ENCODE measurements at regions of chr2 and their contacts with region 1.

Region 1: GRCh38 chr2:131673392-131674173 is 145.9 kb downstream of the CCDC74A start:
- DNase-seq: no peak
- ATAC-seq: peak; percentile 97
- H3K4me3 ChIP-seq: peak overlapping the region; percentile 37 to 60
- H3K27ac ChIP-seq: no peak overlapping the region
- H3K4me1 ChIP-seq: no peaks in the 10 kb centered on the region
- H3K27me3 ChIP-seq: peaks cover 2% of the 10 kb centered on the region; the same call in 1 of the 2 replicates
- CTCF ChIP-seq: peak; percentile 92

Region 2: DNA sequence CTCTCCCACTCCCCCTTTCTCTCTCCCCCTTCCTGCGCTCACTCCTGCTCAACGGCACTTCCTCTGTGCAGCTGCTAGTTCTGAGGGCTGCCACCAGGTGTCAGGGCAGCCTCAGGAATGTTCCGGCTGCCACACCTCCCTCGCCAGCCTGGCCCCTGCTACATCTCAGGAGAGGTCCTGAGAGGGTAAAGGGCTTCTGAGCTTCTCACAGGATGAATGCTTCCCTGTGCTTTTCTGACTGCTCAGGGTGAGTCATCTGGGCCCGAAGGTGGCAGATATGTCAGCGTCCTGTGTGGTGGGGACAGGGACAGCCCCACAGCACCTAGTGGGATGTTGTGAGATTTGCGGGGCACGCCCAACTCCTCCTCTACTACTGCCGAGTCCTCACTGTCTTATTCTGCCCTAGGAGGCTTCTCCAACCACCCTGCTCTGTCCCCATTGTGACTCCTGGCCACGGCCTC is 519.5 kb before region 1 on chr2:
- CTCF ChIA-PET with region 1: interaction called, 5 read pairs
- POLR2A ChIA-PET with region 1: no interaction called
- in situ Hi-C with region 1: no loop called
- intact Hi-C with region 1: loop called (anchors 1 kb)
- DNase-seq: peak; percentile 38
- ATAC-seq: peak; percentile 92
- H3K4me3 ChIP-seq: no peak overlapping the region
- H3K27ac ChIP-seq: no peak overlapping the region
- H3K4me1 ChIP-seq: no peaks in the 10 kb centered on the region; the same call in 1 of the 2 replicates
- H3K27me3 ChIP-seq: no peaks in the 10 kb centered on the region
- CTCF ChIP-seq: peak; percentile 91

Region 3: GRCh38 chr2:131366643-131367042 is 306.9 kb before region 1 on chr2:
- CTCF ChIA-PET with region 1: no interaction called
- POLR2A ChIA-PET with region 1: no interaction called
- in situ Hi-C with region 1: no loop called
- intact Hi-C with region 1: no loop called
- DNase-seq: no peak
- ATAC-seq: no peak
- H3K4me3 ChIP-seq: no peak overlapping the region
- H3K27ac ChIP-seq: no peak overlapping the region
- H3K4me1 ChIP-seq: no peaks in the 10 kb centered on the region
- H3K27me3 ChIP-seq: peaks cover 11% of the 10 kb centered on the region
- CTCF ChIP-seq: no peak

Region 4: DNA sequence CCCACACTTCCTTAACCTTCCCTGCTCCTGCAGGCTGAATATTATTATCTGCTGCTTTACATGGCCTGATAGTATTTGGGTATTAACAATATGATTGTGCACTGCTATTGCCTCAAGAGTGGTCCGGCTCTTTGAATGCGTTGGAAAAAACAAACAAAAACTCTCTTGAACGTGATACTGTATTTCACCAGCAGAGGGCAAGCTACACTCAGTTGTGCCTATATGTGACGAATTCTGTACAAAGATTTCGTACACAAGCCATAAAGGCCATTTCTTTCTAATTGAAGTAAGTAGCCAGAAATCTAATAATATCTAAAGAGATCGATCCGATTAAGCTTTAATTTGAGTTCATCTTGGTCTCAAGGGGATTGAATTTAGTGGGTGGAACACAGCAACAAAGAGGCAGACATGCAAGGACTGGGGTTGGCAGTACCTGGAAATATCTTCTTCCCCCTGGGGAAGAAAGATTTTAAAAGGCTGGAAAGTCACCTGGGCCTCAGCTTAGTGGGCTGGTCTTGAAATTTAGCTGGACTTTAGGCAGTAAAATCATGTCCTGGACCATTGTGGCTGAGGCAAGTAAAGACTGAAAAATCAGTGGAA is 260.3 kb before region 1 on chr2:
- CTCF ChIA-PET with region 1: interaction called, 7 read pairs
- POLR2A ChIA-PET with region 1: no interaction called
- in situ Hi-C with region 1: no loop called
- intact Hi-C with region 1: loop called (anchors 2 kb)
- DNase-seq: peak; percentile 47
- ATAC-seq: peak; percentile 86
- H3K4me3 ChIP-seq: no peak overlapping the region
- H3K27ac ChIP-seq: no peak overlapping the region
- H3K4me1 ChIP-seq: peaks cover 6% of the 10 kb centered on the region; the same call in 1 of the 2 replicates
- H3K27me3 ChIP-seq: peaks cover 25% of the 10 kb centered on the region
- CTCF ChIP-seq: peak; percentile 82

Region 5: DNA sequence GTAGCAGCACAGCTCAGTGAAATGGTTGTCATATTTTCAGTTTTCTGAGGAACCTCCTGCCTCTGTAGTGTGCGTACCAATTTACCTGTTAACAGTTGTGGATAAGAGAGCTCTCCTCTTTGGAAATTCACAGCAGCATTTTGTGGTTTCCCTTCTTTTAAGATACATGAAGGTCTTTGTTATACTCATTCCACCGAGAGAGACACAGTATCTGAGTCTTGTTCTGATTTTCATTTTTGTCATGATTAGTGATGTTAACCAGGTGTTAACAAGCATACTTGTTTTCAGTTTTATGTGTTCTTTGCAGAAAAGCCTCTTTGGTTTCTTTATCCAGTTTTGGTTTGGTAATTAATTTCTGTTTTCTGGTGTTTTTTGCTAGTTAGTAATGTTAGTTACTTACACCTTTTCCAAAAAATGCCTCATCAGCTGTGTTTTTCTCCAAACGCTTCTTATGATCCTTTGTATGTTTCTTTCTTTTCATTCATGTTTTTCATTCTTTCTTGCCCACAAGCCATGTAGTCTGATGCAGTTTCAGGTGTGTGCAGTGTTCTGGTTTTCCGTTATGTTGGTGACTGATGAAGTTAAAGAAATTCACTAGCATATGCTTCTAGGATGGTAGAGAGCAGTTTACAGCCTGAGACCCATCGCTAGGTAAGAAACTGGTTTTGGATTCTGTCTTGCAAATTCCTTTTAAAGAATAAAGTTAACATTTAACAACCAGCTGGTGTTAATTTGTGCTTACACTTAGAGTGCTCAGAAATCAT is 115.8 kb before region 1 on chr2:
- CTCF ChIA-PET with region 1: no interaction called
- POLR2A ChIA-PET with region 1: no interaction called
- in situ Hi-C with region 1: no loop called
- intact Hi-C with region 1: loop called (anchors 5 kb)
- DNase-seq: no peak
- ATAC-seq: no peak
- H3K4me3 ChIP-seq: no peak overlapping the region
- H3K27ac ChIP-seq: no peak overlapping the region
- H3K4me1 ChIP-seq: no peaks in the 10 kb centered on the region
- H3K27me3 ChIP-seq: peaks cover 18% of the 10 kb centered on the region; the same call in 1 of the 2 replicates
- CTCF ChIP-seq: no peak

Region 6: DNA sequence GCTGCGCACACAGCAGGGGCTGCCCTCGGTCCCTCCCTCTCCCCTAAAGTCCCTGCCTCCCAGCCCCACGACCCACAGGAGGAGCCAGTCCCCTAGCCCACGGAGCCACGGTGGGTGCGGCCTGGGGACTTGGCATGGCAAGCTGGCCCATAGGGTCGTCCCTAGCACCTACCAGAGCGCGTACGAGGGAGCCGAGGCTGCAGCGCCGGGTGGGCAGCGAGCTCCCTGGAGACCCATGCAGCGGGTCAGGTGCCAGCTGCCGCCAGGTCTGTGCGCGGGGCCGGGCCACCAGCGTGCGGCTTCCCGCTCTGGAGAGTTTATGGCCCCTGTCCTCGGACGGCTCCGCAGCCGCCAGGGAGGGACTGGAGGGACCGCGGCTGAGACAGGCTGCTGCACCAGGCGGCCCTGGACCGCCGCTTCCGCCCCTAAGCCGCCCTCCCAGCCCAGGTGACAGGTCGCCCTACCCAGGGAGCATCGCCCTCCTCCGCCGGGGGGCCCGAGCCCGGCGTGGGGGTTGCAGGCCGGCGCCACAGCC is 127.7 kb after region 1 on chr2:
- CTCF ChIA-PET with region 1: interaction called, 12 read pairs
- POLR2A ChIA-PET with region 1: no interaction called
- in situ Hi-C with region 1: no loop called
- intact Hi-C with region 1: loop called (anchors 1 kb)
- DNase-seq: no peak
- ATAC-seq: no peak
- H3K4me3 ChIP-seq: peak overlapping the region; percentile 20 to 50; a peak in 3 of 4 replicates
- H3K27ac ChIP-seq: no peak overlapping the region
- H3K4me1 ChIP-seq: no peaks in the 10 kb centered on the region
- H3K27me3 ChIP-seq: no peaks in the 10 kb centered on the region
- CTCF ChIP-seq: no peak

Region 7: GRCh38 chr2:131827481-131828163 is 154.0 kb after region 1 on chr2:
- CTCF ChIA-PET with region 1: no interaction called
- POLR2A ChIA-PET with region 1: no interaction called
- in situ Hi-C with region 1: no loop called
- intact Hi-C with region 1: no loop called
- DNase-seq: no peak
- ATAC-seq: no peak
- H3K4me3 ChIP-seq: no peak overlapping the region
- H3K27ac ChIP-seq: no peak overlapping the region
- H3K4me1 ChIP-seq: no peaks in the 10 kb centered on the region
- H3K27me3 ChIP-seq: no peaks in the 10 kb centered on the region
- CTCF ChIP-seq: no peak